Calu3 (cell line): ENCODE measurements at regions of chr3 and their contacts with region 1.

Region 1: GRCh38 chr3:132261506-132261905 is 55.7 kb upstream of the ACP3 start:
- DNase-seq: no peak
- H3K4me3 Mint-ChIP-seq: no peak overlapping the region
- H3K27ac Mint-ChIP-seq: no peak overlapping the region
- H3K4me1 Mint-ChIP-seq: peaks cover 30% of the 10 kb centered on the region
- H3K27me3 Mint-ChIP-seq: no peaks in the 10 kb centered on the region
- CTCF ChIP-seq: no peak

Region 2: GRCh38 chr3:132203889-132204596 is 57.5 kb before region 1 on chr3:
- CTCF ChIA-PET with region 1: no interaction called
- intact Hi-C with region 1: no loop called
- DNase-seq: no peak
- H3K4me3 Mint-ChIP-seq: no peak overlapping the region
- H3K27ac Mint-ChIP-seq: no peak overlapping the region
- H3K4me1 Mint-ChIP-seq: no peaks in the 10 kb centered on the region
- H3K27me3 Mint-ChIP-seq: no peaks in the 10 kb centered on the region
- CTCF ChIP-seq: no peak

Region 3: GRCh38 chr3:132225664-132226063 is 35.8 kb before region 1 on chr3:
- CTCF ChIA-PET with region 1: no interaction called
- intact Hi-C with region 1: no loop called
- DNase-seq: no peak
- H3K4me3 Mint-ChIP-seq: no peak overlapping the region
- H3K27ac Mint-ChIP-seq: no peak overlapping the region
- H3K4me1 Mint-ChIP-seq: no peaks in the 10 kb centered on the region
- H3K27me3 Mint-ChIP-seq: no peaks in the 10 kb centered on the region
- CTCF ChIP-seq: no peak

Region 4: DNA sequence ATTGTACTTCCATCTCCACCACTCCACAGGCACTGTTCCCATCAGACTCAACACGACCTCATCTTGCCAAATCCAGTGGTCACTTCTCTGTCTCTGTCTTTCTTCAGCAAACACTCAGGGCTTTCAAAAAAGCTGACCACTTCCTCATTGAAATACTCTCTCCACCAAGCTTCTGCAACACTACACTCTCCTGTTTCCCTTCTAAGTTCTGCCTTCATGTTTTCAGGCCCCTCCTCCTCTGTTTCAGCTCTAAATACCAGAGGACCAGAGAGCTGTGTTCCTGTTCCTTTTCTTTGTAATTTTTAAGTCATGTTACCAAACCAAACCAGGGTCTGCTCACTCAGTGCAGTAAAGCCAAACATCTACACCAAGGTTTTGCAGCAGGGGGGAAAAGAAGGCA is 21.9 kb after region 1 on chr3:
- CTCF ChIA-PET with region 1: interaction called, 5 read pairs
- intact Hi-C with region 1: loop called (anchors 2 kb)
- DNase-seq: peak; percentile 37
- H3K4me3 Mint-ChIP-seq: no peak overlapping the region
- H3K27ac Mint-ChIP-seq: peak overlapping the region; percentile 7
- H3K4me1 Mint-ChIP-seq: peaks cover 29% of the 10 kb centered on the region
- H3K27me3 Mint-ChIP-seq: no peaks in the 10 kb centered on the region
- CTCF ChIP-seq: no peak